ENCODE measurements at regions of chr20 and their contacts with region 1.

Region 1: GRCh38 chr20:35619196-35620095 is 3.8 kb downstream of the SPAG4 start:
- DNase-seq: peak; percentile 57 to 91 (median 76)
- ATAC-seq: peak; percentile 8
- H3K4me3 ChIP-seq: peak overlapping the region; percentile 64 to 69
- H3K4me3 Mint-ChIP-seq: peak overlapping the region; percentile 90
- H3K27ac ChIP-seq: peak overlapping the region in 1 of 2 experiments; percentile 25
- H3K27ac Mint-ChIP-seq: peak overlapping the region; percentile 75
- H3K4me1 ChIP-seq: peaks cover 27% of the 10 kb centered on the region
- H3K4me1 Mint-ChIP-seq: peaks cover 35% of the 10 kb centered on the region
- H3K27me3 ChIP-seq: peaks cover 0 to 4% of the 10 kb centered on the region in 2 experiments
- H3K27me3 Mint-ChIP-seq: no peaks in the 10 kb centered on the region
- CTCF ChIP-seq: peak; percentile 52

Region 2: DNA sequence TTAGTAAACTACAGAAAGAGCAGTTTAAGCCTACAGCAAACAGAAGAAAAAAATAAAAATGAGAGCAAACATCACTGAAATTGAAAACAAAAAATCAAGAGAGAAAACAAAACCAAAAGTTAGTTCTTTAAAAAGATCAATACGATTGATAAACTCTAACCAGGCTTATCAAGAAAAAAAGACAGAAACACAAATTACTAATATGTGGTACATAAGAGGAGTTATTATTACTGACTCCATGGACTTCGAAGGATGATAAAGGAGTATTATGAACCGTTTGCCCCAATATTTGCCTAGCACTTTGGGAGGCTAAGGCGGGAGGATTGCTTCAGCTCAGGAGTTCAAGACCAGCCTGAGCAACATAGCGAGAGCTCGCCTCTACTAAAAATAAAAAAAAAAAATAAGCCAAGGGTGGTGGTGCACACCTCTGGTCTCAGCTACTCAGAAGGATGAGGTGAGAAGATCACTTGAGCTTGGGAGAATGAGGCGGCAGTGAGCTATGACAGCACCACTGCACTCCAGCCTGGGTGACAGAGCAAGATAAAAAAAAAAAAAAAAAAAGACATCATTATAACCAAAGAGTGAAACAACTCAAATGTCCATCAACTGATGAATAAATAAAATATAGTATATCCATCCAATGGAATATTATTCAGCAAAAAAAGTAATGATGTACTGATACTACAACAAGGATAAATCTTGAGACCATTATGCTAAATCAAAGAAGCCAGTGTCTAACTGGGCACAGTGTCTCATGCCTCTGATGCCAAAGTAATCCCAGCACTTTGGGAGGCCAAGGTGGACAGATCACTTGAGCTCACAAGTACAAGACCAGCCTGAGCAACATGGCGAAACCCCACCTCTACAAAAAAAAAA is 539.7 kb before region 1 on chr20:
- CTCF ChIA-PET with region 1: no interaction called
- POLR2A ChIA-PET with region 1: no interaction called
- intact Hi-C with region 1: no loop called
- DNase-seq: peak in 1 of 9 experiments; percentile 55
- ATAC-seq: peak; percentile 62
- H3K4me3 ChIP-seq: no peak overlapping the region
- H3K4me3 Mint-ChIP-seq: peak overlapping the region; percentile 55
- H3K27ac ChIP-seq: peak overlapping the region in 1 of 2 experiments; percentile 64
- H3K27ac Mint-ChIP-seq: no peak overlapping the region
- H3K4me1 ChIP-seq: peaks cover 19% of the 10 kb centered on the region
- H3K4me1 Mint-ChIP-seq: peaks cover 44% of the 10 kb centered on the region
- H3K27me3 ChIP-seq: no peaks in the 10 kb centered on the region
- H3K27me3 Mint-ChIP-seq: no peaks in the 10 kb centered on the region
- CTCF ChIP-seq: no peak

Region 3: GRCh38 chr20:35277531-35278395 is 341.7 kb before region 1 on chr20 and contains the start of gene MMP24OS:
- CTCF ChIA-PET with region 1: no interaction called
- POLR2A ChIA-PET with region 1: no interaction called
- intact Hi-C with region 1: loop called in 1 of 2 experiments (anchors 2 kb)
- DNase-seq: peak; percentile 78 to 96 (median 89)
- ATAC-seq: peak; percentile 88
- H3K4me3 ChIP-seq: peak within 1 kb of the TSS; percentile 81
- H3K4me3 Mint-ChIP-seq: peak within 1 kb of the TSS; percentile 96
- H3K27ac ChIP-seq: peak within 1 kb of the TSS; percentile 92 to 99
- H3K27ac Mint-ChIP-seq: peak within 1 kb of the TSS; percentile 99
- H3K4me1 ChIP-seq: peaks cover 14% of the 10 kb centered on the region
- H3K4me1 Mint-ChIP-seq: peaks cover 28% of the 10 kb centered on the region
- H3K27me3 ChIP-seq: no peaks in the 10 kb centered on the region
- H3K27me3 Mint-ChIP-seq: no peaks in the 10 kb centered on the region
- CTCF ChIP-seq: no peak
- total RNA-seq, gene MMP24OS: 64.5 to 67.1 TPM

Region 4: GRCh38 chr20:35404614-35405259 is 214.7 kb before region 1 on chr20:
- CTCF ChIA-PET with region 1: no interaction called
- POLR2A ChIA-PET with region 1: no interaction called
- intact Hi-C with region 1: no loop called
- DNase-seq: peak in 1 of 9 experiments; percentile 42
- ATAC-seq: peak; percentile 36
- H3K4me3 ChIP-seq: no peak overlapping the region
- H3K4me3 Mint-ChIP-seq: peak overlapping the region; percentile 18
- H3K27ac ChIP-seq: peak overlapping the region in 1 of 2 experiments; percentile 3
- H3K27ac Mint-ChIP-seq: peak overlapping the region; percentile 13
- H3K4me1 ChIP-seq: peaks cover 11% of the 10 kb centered on the region
- H3K4me1 Mint-ChIP-seq: peaks cover 23% of the 10 kb centered on the region
- H3K27me3 ChIP-seq: no peaks in the 10 kb centered on the region
- H3K27me3 Mint-ChIP-seq: no peaks in the 10 kb centered on the region
- CTCF ChIP-seq: no peak

Region 5: GRCh38 chr20:35490736-35491181 is 128.7 kb before region 1 on chr20:
- CTCF ChIA-PET with region 1: interaction called, 3 read pairs
- POLR2A ChIA-PET with region 1: no interaction called
- intact Hi-C with region 1: loop called in 1 of 2 experiments (anchors 5 kb)
- DNase-seq: peak; percentile 19 to 87 (median 75)
- ATAC-seq: peak; percentile 98
- H3K4me3 ChIP-seq: peak overlapping the region; percentile 86 to 94
- H3K4me3 Mint-ChIP-seq: peak overlapping the region; percentile 98
- H3K27ac ChIP-seq: peak overlapping the region; percentile 91 to 95
- H3K27ac Mint-ChIP-seq: peak overlapping the region; percentile 99
- H3K4me1 ChIP-seq: peaks cover 46% of the 10 kb centered on the region
- H3K4me1 Mint-ChIP-seq: peaks cover 61% of the 10 kb centered on the region
- H3K27me3 ChIP-seq: no peaks in the 10 kb centered on the region
- H3K27me3 Mint-ChIP-seq: no peaks in the 10 kb centered on the region
- CTCF ChIP-seq: no peak

Region 6: GRCh38 chr20:35575970-35576623 is 43.3 kb before region 1 on chr20:
- CTCF ChIA-PET with region 1: no interaction called
- POLR2A ChIA-PET with region 1: no interaction called
- intact Hi-C with region 1: no loop called
- DNase-seq: no peak
- ATAC-seq: no peak
- H3K4me3 ChIP-seq: no peak overlapping the region
- H3K4me3 Mint-ChIP-seq: no peak overlapping the region
- H3K27ac ChIP-seq: no peak overlapping the region
- H3K27ac Mint-ChIP-seq: no peak overlapping the region
- H3K4me1 ChIP-seq: no peaks in the 10 kb centered on the region
- H3K4me1 Mint-ChIP-seq: no peaks in the 10 kb centered on the region
- H3K27me3 ChIP-seq: no peaks in the 10 kb centered on the region
- H3K27me3 Mint-ChIP-seq: no peaks in the 10 kb centered on the region
- CTCF ChIP-seq: no peak

Region 7: GRCh38 chr20:35629427-35630145 is 10.1 kb after region 1 on chr20:
- CTCF ChIA-PET with region 1: interaction called, 7 read pairs
- POLR2A ChIA-PET with region 1: interaction called, 10 read pairs
- intact Hi-C with region 1: no loop called
- DNase-seq: no peak
- ATAC-seq: no peak
- H3K4me3 ChIP-seq: no peak overlapping the region
- H3K4me3 Mint-ChIP-seq: no peak overlapping the region
- H3K27ac ChIP-seq: no peak overlapping the region
- H3K27ac Mint-ChIP-seq: peak overlapping the region; percentile 57
- H3K4me1 ChIP-seq: no peaks in the 10 kb centered on the region
- H3K4me1 Mint-ChIP-seq: peaks cover 5% of the 10 kb centered on the region
- H3K27me3 ChIP-seq: no peaks in the 10 kb centered on the region
- H3K27me3 Mint-ChIP-seq: no peaks in the 10 kb centered on the region
- CTCF ChIP-seq: no peak

Region 8: DNA sequence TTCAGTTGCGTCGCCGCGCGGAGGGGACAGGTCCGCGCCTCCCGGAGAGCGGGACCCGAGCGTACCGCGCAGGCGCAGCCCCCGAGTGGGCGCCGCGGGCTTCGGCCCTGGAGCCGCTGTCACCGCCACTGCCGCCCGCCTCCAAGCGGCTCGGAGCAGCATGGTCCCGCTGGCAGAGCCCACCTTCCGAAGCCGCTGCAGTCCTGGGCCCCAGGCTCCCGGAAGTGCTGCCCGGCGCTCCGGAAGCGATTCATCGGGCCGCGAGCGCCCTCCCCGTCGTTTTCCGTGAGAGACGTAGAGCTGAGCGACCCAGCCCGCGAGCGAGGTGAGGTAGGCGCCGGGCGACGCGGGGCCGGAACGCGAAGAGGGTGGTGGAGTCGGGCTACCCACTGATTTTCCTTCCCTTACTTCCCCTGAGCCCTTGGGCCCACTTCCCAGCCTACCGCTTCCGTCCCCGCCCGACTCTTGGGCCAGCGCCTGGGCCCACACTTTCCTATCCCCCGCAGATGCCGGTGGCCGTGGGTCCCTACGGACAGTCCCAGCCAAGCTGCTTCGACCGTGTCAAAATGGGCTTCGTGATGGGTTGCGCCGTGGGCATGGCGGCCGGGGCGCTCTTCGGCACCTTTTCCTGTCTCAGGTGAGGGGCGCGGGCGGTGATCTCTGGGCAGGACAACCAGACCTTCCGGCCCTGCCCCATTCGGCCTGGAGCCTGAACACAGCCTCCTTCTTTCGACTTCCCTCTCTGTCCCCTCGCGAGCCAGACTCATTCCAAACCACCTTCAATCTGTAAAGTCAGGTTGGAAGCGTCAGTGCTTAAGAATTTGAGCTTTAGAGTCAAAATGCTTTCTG is 79.9 kb after region 1 on chr20 and contains the starts of genes NFS1 and ROMO1:
- CTCF ChIA-PET with region 1: interaction called, 5 read pairs
- POLR2A ChIA-PET with region 1: interaction called, 5 read pairs
- intact Hi-C with region 1: loop called (anchors 1 kb)
- DNase-seq: peak; percentile 68 to 93 (median 87)
- ATAC-seq: peak; percentile 88
- H3K4me3 ChIP-seq: peak within 1 kb of the TSS; percentile 94 to 98
- H3K4me3 Mint-ChIP-seq: peak within 1 kb of the TSS; percentile 92
- H3K27ac ChIP-seq: peak within 1 kb of the TSS; percentile 85 to 98
- H3K27ac Mint-ChIP-seq: peak within 1 kb of the TSS; percentile 95
- H3K4me1 ChIP-seq: peaks cover 18% of the 10 kb centered on the region
- H3K4me1 Mint-ChIP-seq: peaks cover 42% of the 10 kb centered on the region
- H3K27me3 ChIP-seq: no peaks in the 10 kb centered on the region
- H3K27me3 Mint-ChIP-seq: no peaks in the 10 kb centered on the region
- CTCF ChIP-seq: peak; percentile 21
- total RNA-seq, gene NFS1: 10.7 to 13.1 TPM
- total RNA-seq, gene ROMO1: 39.2 to 43.8 TPM

Region 9: GRCh38 chr20:35735828-35736470 is 116.5 kb after region 1 on chr20:
- CTCF ChIA-PET with region 1: no interaction called
- POLR2A ChIA-PET with region 1: no interaction called
- intact Hi-C with region 1: no loop called
- DNase-seq: no peak
- ATAC-seq: no peak
- H3K4me3 ChIP-seq: peak overlapping the region in 1 of 2 experiments; percentile 10
- H3K4me3 Mint-ChIP-seq: peak overlapping the region; percentile 64
- H3K27ac ChIP-seq: peak overlapping the region in 1 of 2 experiments; percentile 37
- H3K27ac Mint-ChIP-seq: peak overlapping the region; percentile 69
- H3K4me1 ChIP-seq: peaks cover 85% of the 10 kb centered on the region
- H3K4me1 Mint-ChIP-seq: peaks cover 72% of the 10 kb centered on the region
- H3K27me3 ChIP-seq: no peaks in the 10 kb centered on the region
- H3K27me3 Mint-ChIP-seq: no peaks in the 10 kb centered on the region
- CTCF ChIP-seq: no peak

Region 10: DNA sequence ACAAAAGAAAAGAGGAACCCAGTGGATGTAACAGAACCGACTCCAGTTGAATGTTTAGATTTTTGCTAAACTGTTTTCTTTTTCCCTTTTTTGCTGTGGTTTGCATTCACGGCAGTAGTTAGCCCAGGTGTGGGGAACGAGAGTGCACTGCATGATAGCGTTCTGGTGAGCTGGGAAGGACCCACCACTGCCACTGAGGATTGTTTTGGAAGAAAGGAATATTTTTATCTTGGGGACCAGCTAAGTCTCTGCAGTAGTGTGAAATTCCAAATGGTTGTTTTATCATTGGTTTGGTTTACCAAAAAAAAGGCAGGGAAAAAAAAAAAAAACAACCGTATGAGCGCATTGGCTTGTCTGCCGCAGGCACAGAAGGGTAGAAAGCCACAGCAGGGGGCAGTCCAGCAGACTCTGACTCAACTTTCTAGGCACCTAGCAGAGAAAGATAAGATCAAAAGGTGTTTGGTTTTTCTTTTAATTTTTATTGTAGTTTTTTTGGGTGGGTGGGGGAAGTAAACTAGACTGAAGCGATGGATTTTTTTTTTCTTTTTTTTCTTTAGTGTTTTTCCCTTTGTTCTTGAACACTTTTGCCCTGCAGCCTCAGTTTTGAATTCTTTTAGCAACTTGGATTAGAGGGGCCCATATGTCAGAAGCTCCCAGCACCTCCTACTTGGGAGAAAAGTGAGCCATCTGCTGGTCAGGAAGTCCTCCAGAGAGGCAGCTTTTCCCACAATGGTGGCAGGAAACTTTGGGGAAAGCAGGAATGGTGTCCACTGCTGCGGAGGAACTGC is 972.6 kb after region 1 on chr20:
- CTCF ChIA-PET with region 1: no interaction called
- POLR2A ChIA-PET with region 1: no interaction called
- intact Hi-C with region 1: loop called in 1 of 2 experiments (anchors 10 kb)
- DNase-seq: peak in 5 of 9 experiments; percentile 54 to 81 (median 74)
- ATAC-seq: peak; percentile 55
- H3K4me3 ChIP-seq: no peak overlapping the region
- H3K4me3 Mint-ChIP-seq: no peak overlapping the region
- H3K27ac ChIP-seq: peak overlapping the region in 1 of 2 experiments; percentile 49
- H3K27ac Mint-ChIP-seq: peak overlapping the region; percentile 71
- H3K4me1 ChIP-seq: peaks cover 38% of the 10 kb centered on the region
- H3K4me1 Mint-ChIP-seq: peaks cover 53% of the 10 kb centered on the region
- H3K27me3 ChIP-seq: no peaks in the 10 kb centered on the region
- H3K27me3 Mint-ChIP-seq: no peaks in the 10 kb centered on the region
- CTCF ChIP-seq: no peak

Measured in CD8-positive, alpha-beta T cell (primary cell).